ENCODE measurements at regions of chr19 and their contacts with region 1.

Region 1: DNA sequence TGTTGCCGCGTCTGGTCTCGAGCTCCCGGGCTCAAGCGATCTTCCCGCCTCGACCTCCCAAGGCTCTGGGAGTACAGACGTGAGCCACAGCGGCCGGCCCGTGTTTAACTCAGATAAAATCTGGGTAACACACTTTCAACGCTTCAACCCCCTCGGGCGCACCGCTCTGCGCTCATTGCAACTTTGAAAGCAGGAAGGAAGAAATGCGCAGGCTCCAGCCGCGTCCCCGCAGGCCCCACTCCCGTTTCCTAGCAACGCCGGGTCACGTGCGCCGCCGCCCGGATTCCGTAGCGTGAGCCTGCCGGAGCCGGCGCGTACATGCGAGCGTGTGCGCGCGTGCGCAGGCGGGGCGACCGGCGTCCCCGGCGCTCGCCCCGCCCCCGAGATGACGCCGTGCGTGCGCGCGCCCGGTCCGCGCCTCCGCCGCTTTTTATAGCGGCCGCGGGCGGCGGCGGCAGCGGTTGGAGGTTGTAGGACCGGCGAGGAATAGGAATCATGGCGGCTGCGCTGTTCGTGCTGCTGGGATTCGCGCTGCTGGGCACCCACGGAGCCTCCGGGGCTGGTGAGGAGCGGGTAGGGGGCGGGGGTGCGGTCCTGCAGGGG is at the start of gene BSG:
- DNase-seq: peak; percentile 98 to 99 (median 99)
- H3K4me3 ChIP-seq: peak within 1 kb of the TSS; percentile 75 to 81
- H3K4me3 Mint-ChIP-seq: peak within 1 kb of the TSS; percentile 95 to 99 (median 98)
- H3K27ac ChIP-seq: peak within 1 kb of the TSS; percentile 70
- H3K27ac Mint-ChIP-seq: peak within 1 kb of the TSS; percentile 96 to 100 (median 98)
- H3K4me1 ChIP-seq: peaks cover 46% of the 10 kb centered on the region
- H3K4me1 Mint-ChIP-seq: peaks cover 18 to 49% (median 35%) of the 10 kb centered on the region in 4 donors
- H3K27me3 ChIP-seq: no peaks in the 10 kb centered on the region
- H3K27me3 Mint-ChIP-seq: no peaks in the 10 kb centered on the region
- total RNA-seq, gene BSG: 150 to 151 TPM

Region 2: DNA sequence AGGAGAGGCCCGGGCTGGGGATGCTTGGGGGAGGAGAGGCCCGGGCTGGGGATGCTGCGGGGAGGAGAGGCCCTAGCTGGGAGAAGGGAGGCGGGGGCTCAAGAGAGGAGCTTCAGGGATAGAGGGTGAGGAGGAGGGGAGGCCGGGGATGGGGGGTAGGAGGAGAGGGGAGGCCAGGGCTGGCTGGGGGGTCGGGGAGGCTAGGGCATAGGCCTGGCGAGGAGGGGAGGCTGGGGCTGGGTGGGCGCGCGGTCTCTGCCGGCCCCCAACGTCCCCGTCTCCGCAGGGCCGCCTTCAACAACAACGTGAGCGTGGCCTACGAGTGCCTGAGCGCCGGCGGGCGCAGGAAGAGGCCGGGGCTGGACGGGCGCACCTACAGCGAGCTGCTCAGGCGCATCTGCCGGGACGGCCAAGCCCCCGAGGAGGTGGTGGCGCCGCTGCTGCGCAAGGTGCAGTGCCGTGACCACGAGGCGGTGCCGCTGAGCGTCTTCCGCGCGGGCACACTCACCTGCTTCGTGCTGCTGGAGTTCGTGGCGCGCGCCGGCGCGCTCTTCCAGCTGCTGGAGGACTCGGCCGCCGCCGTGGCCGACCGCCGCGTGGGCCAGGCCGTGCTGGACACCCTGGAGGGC is 53.5 kb before region 1 on chr19:
- CTCF ChIA-PET with region 1: no interaction called
- POLR2A ChIA-PET with region 1: interaction called, 4 read pairs
- intact Hi-C with region 1: loop called (anchors 1 kb)
- DNase-seq: peak in 4 of 5 donors; percentile 58 to 68 (median 63)
- H3K4me3 ChIP-seq: no peak overlapping the region
- H3K4me3 Mint-ChIP-seq: peak overlapping the region in 1 of 8 donors; percentile 41
- H3K27ac ChIP-seq: no peak overlapping the region
- H3K27ac Mint-ChIP-seq: peak overlapping the region in 2 of 7 donors; percentile 18 to 43
- H3K4me1 ChIP-seq: no peaks in the 10 kb centered on the region
- H3K4me1 Mint-ChIP-seq: peaks cover 4 to 19% (median 13%) of the 10 kb centered on the region in 4 donors
- H3K27me3 ChIP-seq: no peaks in the 10 kb centered on the region
- H3K27me3 Mint-ChIP-seq: no peaks in the 10 kb centered on the region

Region 3: GRCh38 chr19:531009-531752 is 41.1 kb before region 1 on chr19:
- CTCF ChIA-PET with region 1: interaction called, 4 read pairs
- POLR2A ChIA-PET with region 1: interaction called, 22 read pairs
- intact Hi-C with region 1: loop called (anchors 1 kb)
- DNase-seq: peak; percentile 79 to 98 (median 92)
- H3K4me3 ChIP-seq: peak overlapping the region in 1 of 2 donors; percentile 61
- H3K4me3 Mint-ChIP-seq: peak overlapping the region; percentile 79 to 87 (median 84)
- H3K27ac ChIP-seq: peak overlapping the region; percentile 81
- H3K27ac Mint-ChIP-seq: peak overlapping the region; percentile 58 to 93 (median 88)
- H3K4me1 ChIP-seq: peaks cover 27% of the 10 kb centered on the region
- H3K4me1 Mint-ChIP-seq: peaks cover 6 to 24% (median 10%) of the 10 kb centered on the region in 4 donors
- H3K27me3 ChIP-seq: no peaks in the 10 kb centered on the region
- H3K27me3 Mint-ChIP-seq: peaks cover 0 to 3% of the 10 kb centered on the region in 2 donors

Region 4: GRCh38 chr19:588093-588740 is 16.0 kb after region 1 on chr19:
- CTCF ChIA-PET with region 1: interaction called, 10 read pairs
- POLR2A ChIA-PET with region 1: interaction called, 7 read pairs
- intact Hi-C with region 1: loop called (anchors 2 kb)
- DNase-seq: peak; percentile 57 to 81 (median 62)
- H3K4me3 ChIP-seq: no peak overlapping the region
- H3K4me3 Mint-ChIP-seq: peak overlapping the region in 4 of 8 donors; percentile 42 to 65 (median 52)
- H3K27ac ChIP-seq: no peak overlapping the region
- H3K27ac Mint-ChIP-seq: peak overlapping the region in 1 of 7 donors; percentile 59
- H3K4me1 ChIP-seq: peaks cover 19% of the 10 kb centered on the region
- H3K4me1 Mint-ChIP-seq: peaks cover 3 to 14% (median 6%) of the 10 kb centered on the region in 4 donors
- H3K27me3 ChIP-seq: peaks cover 6% of the 10 kb centered on the region
- H3K27me3 Mint-ChIP-seq: peaks cover 6 to 7% of the 10 kb centered on the region in 2 donors

Region 5: DNA sequence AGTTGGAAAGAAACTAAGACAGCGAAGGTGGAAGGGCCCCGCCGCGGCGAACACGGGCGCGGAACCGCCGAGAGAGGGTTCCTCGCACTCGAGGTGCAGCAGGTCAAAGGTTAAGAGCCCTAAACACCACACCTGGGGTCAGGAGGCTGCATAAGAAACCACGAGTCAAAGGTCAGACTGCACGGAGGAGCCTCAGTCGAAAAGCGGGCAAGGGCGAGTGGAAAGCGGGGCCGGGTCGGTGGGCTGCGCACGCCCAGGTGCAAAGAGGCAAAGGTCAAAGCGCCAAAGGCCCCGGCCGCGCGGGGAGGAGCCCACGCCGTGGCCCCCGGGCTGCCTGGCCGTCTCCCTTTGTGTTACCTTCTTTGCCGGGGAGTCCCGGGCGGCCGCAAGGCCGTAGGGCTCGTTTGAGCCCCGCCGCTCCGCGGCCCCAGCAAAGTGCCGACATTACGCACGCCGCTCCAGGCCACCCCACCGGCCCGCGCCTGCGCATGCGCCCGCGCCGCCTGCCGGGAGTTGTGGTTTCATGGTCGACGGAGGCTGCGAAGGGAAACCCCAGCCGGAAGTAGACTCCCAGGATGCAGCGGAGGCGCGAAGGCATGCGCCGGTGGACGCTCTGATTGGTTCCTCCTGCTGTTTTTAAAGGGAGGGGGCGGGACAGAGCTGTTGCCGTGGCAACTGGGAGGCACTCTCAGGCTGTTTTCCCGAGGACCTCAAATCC is 61.0 kb after region 1 on chr19 and contains the start of gene POLRMT:
- CTCF ChIA-PET with region 1: no interaction called
- POLR2A ChIA-PET with region 1: interaction called, 8 read pairs
- intact Hi-C with region 1: loop called (anchors 1 kb)
- DNase-seq: peak; percentile 94 to 96 (median 96)
- H3K4me3 ChIP-seq: peak within 1 kb of the TSS; percentile 61 to 86
- H3K4me3 Mint-ChIP-seq: peak within 1 kb of the TSS; percentile 90 to 98 (median 96)
- H3K27ac ChIP-seq: peak within 1 kb of the TSS; percentile 71
- H3K27ac Mint-ChIP-seq: peak within 1 kb of the TSS; percentile 94 to 98 (median 97)
- H3K4me1 ChIP-seq: peaks cover 22% of the 10 kb centered on the region
- H3K4me1 Mint-ChIP-seq: peaks cover 2 to 49% (median 24%) of the 10 kb centered on the region in 4 donors
- H3K27me3 ChIP-seq: no peaks in the 10 kb centered on the region
- H3K27me3 Mint-ChIP-seq: no peaks in the 10 kb centered on the region
- total RNA-seq, gene POLRMT: 98.9 to 103 TPM

Region 6: DNA sequence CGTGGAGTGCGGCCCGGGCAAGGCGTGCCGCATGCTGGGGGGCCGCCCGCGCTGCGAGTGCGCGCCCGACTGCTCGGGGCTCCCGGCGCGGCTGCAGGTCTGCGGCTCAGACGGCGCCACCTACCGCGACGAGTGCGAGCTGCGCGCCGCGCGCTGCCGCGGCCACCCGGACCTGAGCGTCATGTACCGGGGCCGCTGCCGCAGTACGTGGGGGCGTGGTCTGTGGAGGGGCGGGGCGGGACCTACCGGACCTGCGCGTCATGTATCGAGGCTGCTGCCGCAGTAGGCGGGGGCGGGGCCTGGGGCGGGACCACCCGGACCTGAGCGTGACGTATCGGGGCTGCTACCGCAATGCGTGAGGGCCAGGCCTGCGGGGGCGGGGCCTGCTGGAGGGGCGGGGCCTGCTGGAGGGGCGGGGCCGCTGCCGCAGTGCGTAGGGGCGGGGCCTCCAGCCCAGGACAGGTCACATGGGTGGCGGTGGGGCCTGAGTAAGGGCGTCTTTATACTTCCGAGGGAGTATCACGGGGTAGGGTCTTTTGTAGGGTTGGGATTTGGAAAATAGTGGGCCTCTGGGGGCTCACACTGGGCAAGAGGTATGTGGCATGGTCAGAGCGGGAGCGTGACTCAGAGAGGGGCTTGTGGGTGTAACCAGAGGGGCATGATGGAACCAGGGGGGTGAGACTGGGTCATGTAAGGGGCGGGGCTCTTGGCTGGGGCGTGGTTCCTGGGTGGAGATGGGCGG is 108.2 kb after region 1 on chr19:
- CTCF ChIA-PET with region 1: no interaction called
- POLR2A ChIA-PET with region 1: interaction called, 3 read pairs
- intact Hi-C with region 1: loop called (anchors 1 kb)
- DNase-seq: peak; percentile 96 to 100 (median 98)
- H3K4me3 ChIP-seq: peak overlapping the region; percentile 34 to 76
- H3K4me3 Mint-ChIP-seq: peak overlapping the region; percentile 89 to 98 (median 94)
- H3K27ac ChIP-seq: peak overlapping the region; percentile 58
- H3K27ac Mint-ChIP-seq: peak overlapping the region; percentile 78 to 100 (median 99)
- H3K4me1 ChIP-seq: peaks cover 13% of the 10 kb centered on the region
- H3K4me1 Mint-ChIP-seq: peaks cover 0 to 6% (median 1%) of the 10 kb centered on the region in 4 donors
- H3K27me3 ChIP-seq: peaks cover 5% of the 10 kb centered on the region
- H3K27me3 Mint-ChIP-seq: peaks cover 3 to 7% of the 10 kb centered on the region in 2 donors